ENCODE measurements at regions of chr9 and their contacts with region 1.

Region 1: GRCh38 chr9:126456441-126457174 is 130.0 kb downstream of the MVB12B start:
- DNase-seq: peak in 1 of 2 donors; percentile 16
- ATAC-seq: peak in 6 of 8 donors; percentile 38 to 78 (median 46)
- H3K4me3 ChIP-seq: no peak overlapping the region
- H3K27ac ChIP-seq: peak overlapping the region in 1 of 10 donors; percentile 41
- H3K4me1 ChIP-seq: peaks cover 0 to 13% (median 6%) of the 10 kb centered on the region in 9 donors
- H3K27me3 ChIP-seq: no peaks in the 10 kb centered on the region
- CTCF ChIP-seq: no peak

Region 2: GRCh38 chr9:126326228-126327005 is 130.2 kb before region 1 on chr9 and contains the start of gene MVB12B:
- intact Hi-C with region 1: no loop called
- DNase-seq: peak in 1 of 2 donors; percentile 59
- ATAC-seq: peak in 7 of 8 donors; percentile 15 to 73 (median 53)
- H3K4me3 ChIP-seq: peak within 1 kb of the TSS; percentile 42 to 86 (median 70)
- H3K27ac ChIP-seq: peak within 1 kb of the TSS; percentile 38 to 90 (median 80)
- H3K4me1 ChIP-seq: peaks cover 3 to 48% (median 22%) of the 10 kb centered on the region in 9 donors
- H3K27me3 ChIP-seq: no peaks in the 10 kb centered on the region
- CTCF ChIP-seq: no peak
- total RNA-seq, gene MVB12B: 8.4 to 16.5 (median 11.2) TPM

Region 3: GRCh38 chr9:126419475-126419874 is 37.1 kb before region 1 on chr9:
- intact Hi-C with region 1: loop called in 1 of 10 experiments (anchors 5 kb)
- DNase-seq: peak in 1 of 2 donors; percentile 26
- ATAC-seq: peak; percentile 54 to 87 (median 80)
- H3K4me3 ChIP-seq: no peak overlapping the region
- H3K27ac ChIP-seq: peak overlapping the region in 1 of 10 donors; percentile 59
- H3K4me1 ChIP-seq: peaks cover 0 to 31% (median 17%) of the 10 kb centered on the region in 9 donors
- H3K27me3 ChIP-seq: no peaks in the 10 kb centered on the region
- CTCF ChIP-seq: no peak

Region 4: DNA sequence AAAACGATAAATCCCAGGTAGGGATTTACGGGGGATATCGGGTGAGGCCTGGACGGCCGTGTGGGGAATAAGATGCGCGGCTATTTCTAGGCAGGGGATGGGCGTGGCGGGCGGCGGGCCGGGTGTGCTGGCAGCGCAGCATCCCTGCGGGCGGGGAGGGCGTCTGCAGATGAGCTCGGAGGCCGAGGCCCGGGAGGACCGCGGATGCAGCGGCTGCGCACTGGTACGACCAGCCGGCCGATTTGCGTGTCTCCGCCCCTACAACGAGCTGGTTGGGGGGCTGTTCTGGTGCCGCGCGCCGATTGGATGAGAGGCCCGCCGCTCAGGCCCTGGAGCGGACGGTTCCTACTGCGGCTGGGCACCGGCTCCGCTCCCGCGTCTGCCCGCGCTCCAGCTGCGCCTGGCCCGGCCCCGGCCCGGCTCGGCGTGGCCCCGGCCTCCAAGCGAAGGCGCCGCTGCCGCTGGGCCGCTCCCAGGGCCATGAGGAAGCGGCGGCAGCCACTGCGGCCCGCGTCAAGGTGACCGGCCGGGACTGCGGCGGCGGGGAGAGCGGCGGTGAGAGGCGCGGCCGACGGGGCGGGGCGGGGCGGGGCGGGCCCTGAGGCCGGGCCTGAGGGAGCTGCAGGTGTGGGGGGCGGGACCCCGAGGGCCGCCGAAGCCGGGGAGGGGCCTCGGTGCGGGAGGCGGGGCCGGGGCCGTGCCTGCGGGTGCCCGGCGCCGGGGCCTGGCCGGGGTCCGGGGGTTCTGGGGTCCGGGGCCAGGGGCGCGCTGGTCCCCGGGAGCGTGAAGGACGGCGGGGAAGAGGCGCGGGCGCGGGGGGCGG is 458.1 kb after region 1 on chr9 and contains the start of gene RALGPS1:
- intact Hi-C with region 1: no loop called
- DNase-seq: peak; percentile 96 to 97
- ATAC-seq: peak; percentile 98 to 100 (median 99)
- H3K4me3 ChIP-seq: peak within 1 kb of the TSS; percentile 25 to 83 (median 51)
- H3K27ac ChIP-seq: peak within 1 kb of the TSS; percentile 13 to 88 (median 78)
- H3K4me1 ChIP-seq: peaks cover 0 to 13% (median 6%) of the 10 kb centered on the region in 9 donors
- H3K27me3 ChIP-seq: peaks cover 0 to 10% (median 0%) of the 10 kb centered on the region in 7 donors
- CTCF ChIP-seq: peak in 1 of 9 donors; percentile 6
- total RNA-seq, gene RALGPS1: 13.5 to 25.0 (median 17.0) TPM

Measured in heart right ventricle (tissue), 16 donors.